ENCODE measurements at regions of chr17 and their contacts with region 1.

Region 1: GRCh38 chr17:40791787-40792436 is 7.8 kb downstream of the KRT28 start:
- DNase-seq: peak; percentile 59
- H3K4me3 ChIP-seq: no peak overlapping the region
- H3K27ac ChIP-seq: no peak overlapping the region
- H3K4me1 ChIP-seq: no peaks in the 10 kb centered on the region
- H3K27me3 ChIP-seq: peaks cover 12 to 15% of the 10 kb centered on the region in 2 experiments
- CTCF ChIP-seq: peak; percentile 33 to 49
- POLR2A ChIP-seq: no peak

Region 2: DNA sequence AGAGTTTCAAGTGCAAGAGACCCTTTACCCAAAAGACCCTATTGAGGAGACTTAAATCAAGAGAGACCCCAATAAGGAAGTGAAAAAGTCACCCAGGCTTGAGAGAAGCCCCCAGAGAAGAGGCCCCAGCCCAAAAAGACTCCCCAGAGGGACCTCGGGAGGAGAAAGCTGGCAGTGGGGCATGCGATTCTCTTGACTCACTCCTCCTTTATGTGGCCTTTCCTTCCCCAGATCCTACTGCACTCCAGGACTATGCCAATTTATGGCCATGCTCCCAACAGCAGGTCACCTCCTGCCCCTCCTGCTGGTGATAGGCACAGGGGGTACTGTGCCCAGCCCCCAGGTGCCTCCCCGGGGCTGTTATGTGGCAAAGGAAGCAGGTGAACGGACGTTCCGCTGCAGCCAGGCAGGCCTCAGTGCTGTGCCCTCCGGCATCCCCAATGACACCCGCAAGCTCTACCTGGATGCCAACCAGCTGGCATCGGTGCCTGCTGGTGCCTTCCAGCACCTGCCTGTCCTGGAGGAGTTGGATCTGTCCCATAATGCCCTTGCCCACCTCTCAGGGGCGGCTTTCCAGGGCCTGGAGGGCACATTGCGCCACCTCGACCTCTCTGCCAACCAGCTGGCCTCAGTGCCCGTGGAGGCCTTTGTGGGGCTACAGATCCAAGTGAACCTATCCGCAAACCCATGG is 848.1 kb before region 1 on chr17:
- CTCF ChIA-PET with region 1: no interaction called
- POLR2A ChIA-PET with region 1: no interaction called
- dilution Hi-C with region 1: no loop called
- intact Hi-C with region 1: no loop called
- DNase-seq: no peak
- H3K4me3 ChIP-seq: no peak overlapping the region
- H3K27ac ChIP-seq: no peak overlapping the region
- H3K4me1 ChIP-seq: peaks cover 5% of the 10 kb centered on the region
- H3K27me3 ChIP-seq: no peaks in the 10 kb centered on the region
- CTCF ChIP-seq: no peak
- POLR2A ChIP-seq: no peak

Region 3: GRCh38 chr17:40615295-40615988 is 176.5 kb before region 1 on chr17:
- CTCF ChIA-PET with region 1: interaction called, 24 read pairs
- POLR2A ChIA-PET with region 1: no interaction called
- dilution Hi-C with region 1: no loop called
- intact Hi-C with region 1: loop called (anchors 1 kb)
- DNase-seq: peak; percentile 26
- H3K4me3 ChIP-seq: no peak overlapping the region
- H3K27ac ChIP-seq: no peak overlapping the region
- H3K4me1 ChIP-seq: no peaks in the 10 kb centered on the region
- H3K27me3 ChIP-seq: peaks cover 13 to 14% of the 10 kb centered on the region in 2 experiments
- CTCF ChIP-seq: peak; percentile 23 to 39
- POLR2A ChIP-seq: no peak

Region 4: GRCh38 chr17:40622509-40622928 is 169.4 kb before region 1 on chr17:
- CTCF ChIA-PET with region 1: interaction called, 24 read pairs
- POLR2A ChIA-PET with region 1: no interaction called
- dilution Hi-C with region 1: no loop called
- intact Hi-C with region 1: loop called (anchors 1 kb)
- DNase-seq: no peak
- H3K4me3 ChIP-seq: no peak overlapping the region
- H3K27ac ChIP-seq: no peak overlapping the region
- H3K4me1 ChIP-seq: no peaks in the 10 kb centered on the region
- H3K27me3 ChIP-seq: no peaks in the 10 kb centered on the region
- CTCF ChIP-seq: no peak
- POLR2A ChIP-seq: no peak

Region 5: DNA sequence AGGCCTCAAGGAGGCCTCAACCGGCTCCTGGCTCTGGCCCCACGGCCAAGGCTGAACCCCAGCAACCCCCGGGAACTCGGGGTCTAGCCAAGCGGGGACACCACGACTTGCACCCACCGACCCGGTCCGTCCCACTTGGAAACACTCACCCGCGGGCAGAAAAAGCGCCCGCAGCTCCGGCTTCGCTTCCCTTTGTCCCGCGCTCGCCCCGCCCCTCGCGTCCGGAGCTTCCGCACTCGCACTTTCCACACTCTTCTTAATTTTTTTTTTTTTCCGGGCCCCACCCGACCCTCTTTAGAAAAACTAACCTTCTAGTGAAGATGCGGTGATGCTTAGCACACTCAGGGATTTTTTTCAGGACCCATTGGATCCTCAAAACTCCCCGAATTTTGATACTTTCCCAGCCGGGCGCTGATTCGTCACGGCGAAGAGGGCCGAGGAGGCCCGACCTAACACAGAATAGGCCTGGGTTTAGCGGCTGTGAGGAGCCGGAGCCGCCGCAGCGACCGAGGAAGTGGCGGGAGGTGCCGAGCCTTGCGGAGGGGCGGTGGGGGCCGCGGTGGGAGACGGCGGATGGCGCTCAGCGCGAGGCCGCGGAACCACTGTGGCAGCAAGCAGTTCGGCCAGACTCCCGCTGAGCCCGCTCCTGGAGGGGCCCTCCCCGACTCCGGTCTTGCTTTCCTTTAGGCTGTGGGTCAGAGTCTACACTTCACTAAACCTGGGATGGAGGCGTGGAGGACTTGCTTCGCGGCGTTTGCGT is 144.1 kb before region 1 on chr17 and contains the start of gene SMARCE1:
- CTCF ChIA-PET with region 1: interaction called, 3 read pairs
- POLR2A ChIA-PET with region 1: no interaction called
- dilution Hi-C with region 1: no loop called
- intact Hi-C with region 1: loop called (anchors 1 kb)
- DNase-seq: peak; percentile 83
- H3K4me3 ChIP-seq: peak within 1 kb of the TSS; percentile 62 to 100 (median 100)
- H3K27ac ChIP-seq: peak within 1 kb of the TSS; percentile 96
- H3K4me1 ChIP-seq: peaks cover 22% of the 10 kb centered on the region
- H3K27me3 ChIP-seq: no peaks in the 10 kb centered on the region
- CTCF ChIP-seq: no peak
- POLR2A ChIP-seq: peak; percentile 66
- total RNA-seq, gene SMARCE1: 120 and 127 TPM in 2 replicates

Region 6: DNA sequence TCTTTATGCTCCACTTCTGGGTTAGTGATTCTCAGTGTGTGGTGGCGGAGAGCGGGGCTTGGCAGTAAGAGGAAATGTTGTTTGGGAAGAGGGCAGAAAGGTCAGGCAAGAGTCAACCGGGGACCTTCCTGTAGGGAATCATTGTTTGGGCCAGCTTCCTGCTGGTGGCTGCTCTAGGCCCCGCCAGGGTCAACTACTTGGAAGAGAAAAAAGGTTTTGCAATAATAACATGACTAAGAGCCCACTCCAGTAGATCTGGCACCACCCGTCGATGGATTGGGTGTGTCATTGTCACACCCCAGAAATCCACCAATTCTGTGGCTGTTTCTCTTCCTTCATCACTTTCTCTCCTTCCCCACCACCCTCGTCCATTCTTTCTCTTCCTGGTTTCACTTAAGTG is 84.2 kb before region 1 on chr17:
- CTCF ChIA-PET with region 1: no interaction called
- POLR2A ChIA-PET with region 1: no interaction called
- dilution Hi-C with region 1: no loop called
- intact Hi-C with region 1: loop called (anchors 5 kb)
- DNase-seq: peak; percentile 85
- H3K4me3 ChIP-seq: no peak overlapping the region
- H3K27ac ChIP-seq: no peak overlapping the region
- H3K4me1 ChIP-seq: peaks cover 12% of the 10 kb centered on the region
- H3K27me3 ChIP-seq: peaks cover 4 to 10% of the 10 kb centered on the region in 2 experiments
- CTCF ChIP-seq: no peak
- POLR2A ChIP-seq: no peak